Calu3 (cell line): ENCODE measurements at regions of chr2 and their contacts with region 1.

Region 1: DNA sequence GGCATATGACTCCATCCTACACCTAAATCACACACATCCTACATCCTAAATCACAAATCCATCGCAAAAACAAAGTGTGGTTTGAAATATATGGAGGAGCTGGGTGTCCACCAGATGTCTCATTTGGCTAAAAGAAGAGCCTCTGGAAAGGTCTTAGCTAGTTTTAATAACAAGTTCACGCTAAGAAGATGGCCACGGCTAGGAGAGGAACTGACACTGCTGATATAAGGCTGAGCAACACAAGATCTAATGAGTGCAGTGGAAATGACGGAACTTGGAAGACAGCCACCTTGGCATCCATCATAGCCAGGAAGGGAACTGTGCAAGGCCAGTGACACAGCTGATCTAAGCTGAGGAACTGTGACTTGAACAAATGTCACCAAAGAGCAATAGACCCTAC is 60.0 kb upstream of the AGAP1 start:
- DNase-seq: no peak
- H3K4me3 Mint-ChIP-seq: no peak overlapping the region
- H3K27ac Mint-ChIP-seq: no peak overlapping the region
- H3K4me1 Mint-ChIP-seq: no peaks in the 10 kb centered on the region
- H3K27me3 Mint-ChIP-seq: peaks cover 44% of the 10 kb centered on the region
- CTCF ChIP-seq: no peak

Region 2: GRCh38 chr2:235406430-235406829 is 27.4 kb before region 1 on chr2:
- CTCF ChIA-PET with region 1: no interaction called
- intact Hi-C with region 1: no loop called
- DNase-seq: no peak
- H3K4me3 Mint-ChIP-seq: no peak overlapping the region
- H3K27ac Mint-ChIP-seq: no peak overlapping the region
- H3K4me1 Mint-ChIP-seq: peaks cover 29% of the 10 kb centered on the region
- H3K27me3 Mint-ChIP-seq: peaks cover 9% of the 10 kb centered on the region
- CTCF ChIP-seq: no peak

Region 3: GRCh38 chr2:235675678-235676535 is 242.0 kb after region 1 on chr2:
- CTCF ChIA-PET with region 1: interaction called, 10 read pairs
- intact Hi-C with region 1: no loop called
- DNase-seq: peak; percentile 7
- H3K4me3 Mint-ChIP-seq: peak overlapping the region; percentile 22
- H3K27ac Mint-ChIP-seq: peak overlapping the region; percentile 17
- H3K4me1 Mint-ChIP-seq: peaks cover 84% of the 10 kb centered on the region
- H3K27me3 Mint-ChIP-seq: no peaks in the 10 kb centered on the region
- CTCF ChIP-seq: peak; percentile 44